Activated CD4-positive, alpha-beta T cell treated with anti-CD3 and anti-CD28 coated beads for 36 hours (primary cell): ENCODE measurements at regions of chr9 and their contacts with region 1.

Region 1: GRCh38 chr9:6512085-6512657 is 99.2 kb downstream of the UHRF2 start:
- DNase-seq: no peak
- ATAC-seq: no peak
- H3K4me3 Mint-ChIP-seq: no peak overlapping the region
- H3K27ac Mint-ChIP-seq: no peak overlapping the region
- H3K4me1 Mint-ChIP-seq: no peaks in the 10 kb centered on the region
- H3K27me3 Mint-ChIP-seq: no peaks in the 10 kb centered on the region

Region 2: GRCh38 chr9:6467006-6467625 is 45.1 kb before region 1 on chr9:
- CTCF ChIA-PET with region 1: no interaction called
- POLR2A ChIA-PET with region 1: no interaction called
- intact Hi-C with region 1: loop called in 1 of 2 experiments (anchors 10 kb)
- DNase-seq: no peak
- ATAC-seq: no peak
- H3K4me3 Mint-ChIP-seq: no peak overlapping the region
- H3K27ac Mint-ChIP-seq: peak overlapping the region; percentile 69
- H3K4me1 Mint-ChIP-seq: peaks cover 21% of the 10 kb centered on the region
- H3K27me3 Mint-ChIP-seq: no peaks in the 10 kb centered on the region

Region 3: GRCh38 chr9:6619909-6620308 is 107.7 kb after region 1 on chr9:
- CTCF ChIA-PET with region 1: no interaction called
- POLR2A ChIA-PET with region 1: no interaction called
- intact Hi-C with region 1: no loop called
- DNase-seq: no peak
- ATAC-seq: no peak
- H3K4me3 Mint-ChIP-seq: no peak overlapping the region
- H3K27ac Mint-ChIP-seq: no peak overlapping the region
- H3K4me1 Mint-ChIP-seq: no peaks in the 10 kb centered on the region
- H3K27me3 Mint-ChIP-seq: peaks cover 3% of the 10 kb centered on the region

Region 4: DNA sequence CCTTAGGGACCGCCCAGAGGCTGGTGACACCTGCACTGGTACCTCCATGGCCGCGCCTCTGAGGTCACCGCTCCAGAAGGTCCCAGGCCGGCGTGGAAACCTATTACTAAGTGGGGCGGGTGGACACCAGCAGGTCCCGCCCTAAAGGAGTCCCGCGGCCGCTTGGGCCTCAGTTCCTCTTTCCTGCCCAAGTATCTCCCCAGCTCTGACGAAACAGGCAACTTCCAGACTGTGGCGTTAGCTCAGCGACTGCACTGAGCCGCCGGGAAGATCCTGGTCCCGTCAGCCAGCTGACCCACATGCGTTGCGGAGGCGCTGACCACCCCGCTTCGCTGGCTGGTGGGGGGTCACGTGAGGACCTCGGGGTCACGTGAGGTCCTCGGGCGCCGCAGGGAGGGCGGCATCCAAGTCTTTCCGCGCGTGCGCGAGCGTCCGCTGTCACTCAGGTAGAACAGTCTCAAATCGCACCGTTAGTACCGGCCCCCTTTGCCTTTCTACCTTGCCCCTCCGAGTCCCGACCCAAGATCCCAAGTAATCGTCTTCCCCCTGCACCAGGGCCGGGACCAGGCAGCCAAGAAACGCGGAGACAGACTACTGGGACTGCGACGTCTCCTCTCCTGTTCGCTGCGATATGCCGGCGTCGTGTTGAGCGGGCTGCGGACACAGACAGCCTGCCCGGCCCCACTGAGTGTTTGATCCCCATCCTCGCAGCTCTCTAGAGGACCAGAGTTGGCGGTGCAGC is 191.9 kb after region 1 on chr9:
- CTCF ChIA-PET with region 1: no interaction called
- POLR2A ChIA-PET with region 1: no interaction called
- intact Hi-C with region 1: no loop called
- DNase-seq: peak; percentile 93
- ATAC-seq: peak; percentile 88
- H3K4me3 Mint-ChIP-seq: peak overlapping the region; percentile 75
- H3K27ac Mint-ChIP-seq: peak overlapping the region; percentile 77
- H3K4me1 Mint-ChIP-seq: peaks cover 14% of the 10 kb centered on the region
- H3K27me3 Mint-ChIP-seq: no peaks in the 10 kb centered on the region